ENCODE measurements at regions of chr1 and their contacts with region 1.

Region 1: GRCh38 chr1:17027403-17027802 is 15.7 kb upstream of the ATP13A2 start:
- H3K4me3 Mint-ChIP-seq: no peak overlapping the region
- H3K27ac Mint-ChIP-seq: peak overlapping the region; percentile 74
- H3K4me1 Mint-ChIP-seq: peaks cover 53% of the 10 kb centered on the region
- H3K27me3 Mint-ChIP-seq: no peaks in the 10 kb centered on the region

Region 2: DNA sequence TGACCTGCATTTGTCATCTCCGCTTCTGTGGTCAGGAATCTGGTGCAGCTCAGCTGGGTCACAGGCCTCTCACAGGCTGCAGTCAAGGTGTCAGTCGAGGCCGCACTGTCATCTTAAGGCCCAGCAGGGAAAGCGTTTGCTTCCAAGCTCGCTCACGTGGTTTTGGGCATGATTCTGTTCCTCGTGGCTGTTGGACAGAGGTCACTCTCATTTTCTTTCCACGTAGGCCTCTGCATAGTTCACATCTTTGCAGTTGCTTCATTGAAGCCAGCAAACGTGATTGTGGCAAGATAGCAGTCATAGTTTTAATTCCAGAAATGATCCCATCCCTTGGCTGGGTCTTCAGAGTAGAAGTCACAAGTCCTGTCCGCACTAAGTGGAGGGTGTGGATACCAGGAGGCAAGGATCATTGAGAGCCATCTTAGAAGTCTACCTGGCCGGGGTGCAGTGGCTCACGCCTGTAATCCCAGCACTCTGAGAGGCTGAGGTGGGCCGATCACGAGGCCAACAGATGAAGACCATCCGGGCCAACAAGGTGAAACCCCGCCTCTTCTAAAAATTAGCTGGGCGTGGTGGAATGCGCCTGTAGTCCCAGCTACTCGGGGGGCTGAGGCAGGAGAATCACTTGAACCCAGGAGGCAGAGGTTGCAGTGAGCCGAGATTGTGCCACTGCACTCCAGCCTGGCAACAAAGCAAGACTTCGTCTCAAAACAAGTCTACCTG is 562.3 kb before region 1 on chr1:
- intact Hi-C with region 1: no loop called
- H3K4me3 Mint-ChIP-seq: no peak overlapping the region
- H3K27ac Mint-ChIP-seq: no peak overlapping the region
- H3K4me1 Mint-ChIP-seq: peaks cover 18% of the 10 kb centered on the region
- H3K27me3 Mint-ChIP-seq: no peaks in the 10 kb centered on the region

Region 3: DNA sequence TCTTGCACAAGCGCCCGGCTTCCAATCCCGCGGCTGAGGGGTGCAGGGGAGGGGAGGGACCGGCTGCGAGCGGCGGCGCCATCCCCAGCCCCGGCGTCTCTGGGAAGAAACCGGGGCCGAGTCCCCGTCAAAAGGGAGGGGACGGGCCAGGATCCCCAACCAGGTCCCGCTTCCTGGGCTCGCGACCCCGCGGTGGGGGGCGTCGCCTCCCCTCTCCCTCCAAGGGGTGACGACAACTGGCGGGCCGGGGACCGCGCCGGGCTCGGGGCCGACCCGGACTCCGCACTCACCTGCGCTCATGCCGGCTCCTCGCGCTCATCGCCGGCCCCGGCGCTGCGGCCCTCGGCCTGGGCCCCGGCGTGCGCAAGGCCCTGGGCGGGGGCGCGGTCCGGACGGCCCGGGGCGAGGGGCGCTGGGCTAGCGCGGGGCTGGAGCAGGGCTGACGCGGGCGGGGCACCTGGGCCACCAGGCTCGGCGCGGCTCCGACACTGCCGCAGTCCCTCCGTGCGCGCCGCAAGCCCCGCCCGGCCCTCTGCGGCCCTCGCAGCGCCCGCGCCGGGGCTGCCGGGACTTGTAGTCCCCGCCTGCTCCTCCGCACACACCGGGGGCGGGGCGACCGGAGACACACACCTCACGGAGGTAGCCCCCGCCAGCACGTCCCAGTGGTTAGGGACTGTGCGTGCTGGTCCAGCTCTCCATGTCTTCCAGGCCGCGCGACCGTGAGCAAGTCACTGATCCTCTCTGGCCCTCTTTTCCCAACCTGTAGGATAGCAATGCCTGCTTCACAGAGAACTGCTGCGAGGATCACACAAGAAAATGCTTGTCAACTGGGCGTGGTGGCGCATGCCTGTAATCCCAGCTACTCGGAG is 15.7 kb before region 1 on chr1 and contains the start of gene ATP13A2:
- intact Hi-C with region 1: loop called (anchors 2 kb)
- H3K4me3 Mint-ChIP-seq: peak within 1 kb of the TSS; percentile 80
- H3K27ac Mint-ChIP-seq: peak within 1 kb of the TSS; percentile 60
- H3K4me1 Mint-ChIP-seq: peaks cover 52% of the 10 kb centered on the region
- H3K27me3 Mint-ChIP-seq: peaks cover 10% of the 10 kb centered on the region

Region 4: DNA sequence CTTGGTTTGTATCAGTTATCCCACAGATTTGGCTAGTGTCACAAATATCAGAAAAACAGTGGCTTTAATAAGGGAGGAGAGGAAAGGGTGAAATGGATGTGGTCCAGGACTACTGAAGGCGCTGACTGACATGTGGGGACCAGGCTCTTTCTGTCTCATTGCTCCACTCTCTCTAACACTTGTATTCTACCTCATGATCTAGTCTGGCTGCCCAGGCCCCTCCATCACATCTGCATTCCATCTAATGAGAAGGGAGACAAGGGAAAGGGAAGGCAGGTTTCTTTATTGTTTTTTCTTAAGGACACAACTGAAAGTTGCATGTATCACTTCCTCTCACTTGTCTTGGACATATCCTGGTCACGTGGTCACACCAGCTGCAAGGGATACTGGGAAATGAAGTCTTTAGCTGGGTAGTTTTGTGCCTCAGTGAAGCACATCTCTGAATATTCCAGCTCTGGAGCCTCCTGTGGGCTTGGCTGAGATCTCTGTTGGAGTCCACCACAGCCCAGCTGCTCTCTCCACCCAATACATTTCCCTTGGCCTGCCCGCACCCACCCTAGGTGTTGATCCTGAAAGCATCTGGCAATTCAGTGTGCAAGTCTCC is 133.8 kb after region 1 on chr1:
- intact Hi-C with region 1: no loop called
- H3K4me3 Mint-ChIP-seq: no peak overlapping the region
- H3K27ac Mint-ChIP-seq: peak overlapping the region; percentile 30
- H3K4me1 Mint-ChIP-seq: peaks cover 8% of the 10 kb centered on the region
- H3K27me3 Mint-ChIP-seq: peaks cover 11% of the 10 kb centered on the region

Measured in dendritic cell treated with granulocyte-macrophage colony-stimulating factor and Interleukin-4, amounts not matched to agents 40 ng/mL and 50 ng/mL, for 4 days (primary cell).